ENCODE measurements at regions of chr14 and their contacts with region 1.

Region 1: DNA sequence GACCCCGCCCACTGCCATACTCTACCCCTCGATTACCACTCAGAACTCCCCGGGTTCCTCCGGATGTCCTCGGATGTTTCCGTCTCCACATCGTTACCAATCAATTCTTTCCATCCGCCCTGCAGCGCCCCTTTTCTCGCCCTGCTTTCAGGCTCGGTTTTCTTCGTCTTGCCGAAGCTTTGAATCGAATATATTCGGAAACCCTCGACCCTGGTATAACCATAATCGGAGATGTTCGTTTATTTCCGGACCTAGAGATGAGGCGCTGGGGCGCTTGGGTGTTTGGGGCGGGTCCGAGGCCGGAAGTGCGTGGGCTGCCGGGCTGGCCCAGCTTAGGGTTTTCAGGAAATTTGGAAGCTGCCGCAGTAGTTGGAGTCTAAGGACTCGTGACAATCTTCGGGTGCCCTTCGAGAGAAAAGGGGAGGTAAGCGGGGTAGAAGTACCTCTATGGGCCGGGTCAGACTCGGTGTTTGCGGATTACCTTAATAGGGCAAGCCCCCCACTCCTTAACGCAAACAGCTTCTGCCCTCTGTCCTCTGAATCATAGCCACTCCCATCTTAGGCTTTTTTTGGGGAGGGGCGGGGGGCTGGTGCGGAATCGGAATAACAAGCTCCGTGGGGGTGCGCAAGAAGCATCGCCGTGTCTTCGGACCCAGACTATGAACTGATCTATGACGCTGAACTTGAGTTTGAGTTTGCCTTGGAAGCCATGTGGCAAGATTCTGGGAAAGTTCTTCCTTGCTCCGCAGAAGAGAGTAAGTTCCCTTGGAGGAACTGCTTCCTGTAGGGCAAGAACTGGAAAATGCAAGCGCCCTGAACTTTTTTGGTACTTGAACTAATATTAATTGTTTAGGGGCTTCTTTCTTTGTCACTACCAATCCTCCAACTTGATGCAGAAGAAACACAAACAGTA is at the start of gene C14orf119:
- DNase-seq: peak; percentile 99 to 100 (median 100)
- H3K4me3 ChIP-seq: peak within 1 kb of the TSS; percentile 90 to 91
- H3K4me3 Mint-ChIP-seq: no peak within 1 kb of the TSS
- H3K27ac ChIP-seq: peak within 1 kb of the TSS; percentile 94
- H3K27ac Mint-ChIP-seq: no peak within 1 kb of the TSS
- H3K4me1 ChIP-seq: peaks cover 45% of the 10 kb centered on the region
- H3K4me1 Mint-ChIP-seq: peaks cover 17 to 31% (median 24%) of the 10 kb centered on the region in 4 donors
- H3K27me3 ChIP-seq: no peaks in the 10 kb centered on the region
- H3K27me3 Mint-ChIP-seq: no peaks in the 10 kb centered on the region
- total RNA-seq, gene C14orf119: 49.7 to 54.0 TPM

Region 2: GRCh38 chr14:22685467-22685866 is 410.0 kb before region 1 on chr14:
- CTCF ChIA-PET with region 1: no interaction called
- POLR2A ChIA-PET with region 1: no interaction called
- intact Hi-C with region 1: no loop called
- DNase-seq: no peak
- H3K4me3 ChIP-seq: no peak overlapping the region
- H3K4me3 Mint-ChIP-seq: no peak overlapping the region
- H3K27ac ChIP-seq: no peak overlapping the region
- H3K27ac Mint-ChIP-seq: no peak overlapping the region
- H3K4me1 ChIP-seq: no peaks in the 10 kb centered on the region
- H3K4me1 Mint-ChIP-seq: no peaks in the 10 kb centered on the region
- H3K27me3 ChIP-seq: no peaks in the 10 kb centered on the region
- H3K27me3 Mint-ChIP-seq: peaks cover 38 to 39% of the 10 kb centered on the region in 2 donors

Region 3: GRCh38 chr14:22766456-22767322 is 328.8 kb before region 1 on chr14 and contains the start of gene OXA1L:
- CTCF ChIA-PET with region 1: no interaction called
- POLR2A ChIA-PET with region 1: interaction called, 13 read pairs
- intact Hi-C with region 1: no loop called
- DNase-seq: peak; percentile 95 to 98 (median 98)
- H3K4me3 ChIP-seq: peak within 1 kb of the TSS; percentile 62 to 88
- H3K4me3 Mint-ChIP-seq: peak within 1 kb of the TSS; percentile 85 to 96 (median 94)
- H3K27ac ChIP-seq: peak within 1 kb of the TSS; percentile 88
- H3K27ac Mint-ChIP-seq: peak within 1 kb of the TSS; percentile 86 to 100 (median 98)
- H3K4me1 ChIP-seq: peaks cover 24% of the 10 kb centered on the region
- H3K4me1 Mint-ChIP-seq: peaks cover 26 to 39% (median 34%) of the 10 kb centered on the region in 4 donors
- H3K27me3 ChIP-seq: no peaks in the 10 kb centered on the region
- H3K27me3 Mint-ChIP-seq: no peaks in the 10 kb centered on the region
- total RNA-seq, gene OXA1L: 129 to 137 TPM

Region 4: GRCh38 chr14:22781586-22781991 is 313.9 kb before region 1 on chr14:
- CTCF ChIA-PET with region 1: no interaction called
- POLR2A ChIA-PET with region 1: no interaction called
- intact Hi-C with region 1: no loop called
- DNase-seq: no peak
- H3K4me3 ChIP-seq: no peak overlapping the region
- H3K4me3 Mint-ChIP-seq: peak overlapping the region in 1 of 8 donors; percentile 60
- H3K27ac ChIP-seq: no peak overlapping the region
- H3K27ac Mint-ChIP-seq: peak overlapping the region in 3 of 7 donors; percentile 42 to 62 (median 60)
- H3K4me1 ChIP-seq: no peaks in the 10 kb centered on the region
- H3K4me1 Mint-ChIP-seq: no peaks in the 10 kb centered on the region
- H3K27me3 ChIP-seq: no peaks in the 10 kb centered on the region
- H3K27me3 Mint-ChIP-seq: peaks cover 0 to 2% of the 10 kb centered on the region in 2 donors

Region 5: DNA sequence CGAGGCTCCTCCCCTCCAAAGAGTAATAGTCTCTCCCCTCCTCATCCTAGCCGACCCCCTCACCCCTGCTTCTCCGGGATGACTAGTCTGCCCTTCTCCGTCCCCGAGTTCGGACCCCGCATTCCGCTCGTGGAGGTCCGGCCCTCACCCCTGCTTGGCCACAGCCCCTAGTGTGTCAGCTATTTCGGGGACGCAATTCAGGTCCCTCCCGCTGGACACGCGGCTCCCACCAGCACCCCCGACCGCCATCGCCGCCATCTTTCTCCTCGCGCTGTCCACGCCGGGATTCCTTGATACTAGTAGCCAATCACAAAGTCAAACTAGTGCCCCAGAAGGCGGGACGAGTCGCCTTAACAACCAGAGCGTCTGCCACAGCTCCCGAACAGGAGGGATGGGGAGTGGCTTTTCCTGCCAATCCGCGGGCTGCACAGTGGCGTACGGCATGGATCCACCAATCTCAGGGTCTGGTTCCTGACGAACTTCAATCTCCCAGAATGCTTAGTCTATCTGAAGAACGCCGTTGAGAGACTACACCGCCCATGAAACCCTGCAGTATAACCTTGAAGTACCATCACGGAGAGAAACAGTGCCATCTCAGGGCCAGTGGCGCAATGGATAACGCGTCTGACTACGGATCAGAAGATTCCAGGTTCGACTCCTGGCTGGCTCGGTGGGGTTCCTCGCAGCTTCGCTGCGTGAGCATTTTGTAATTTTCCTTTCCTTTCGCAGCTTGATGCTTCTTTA is 166.2 kb before region 1 on chr14 and contains the start of gene PRMT5:
- CTCF ChIA-PET with region 1: interaction called, 3 read pairs
- POLR2A ChIA-PET with region 1: interaction called, 17 read pairs
- intact Hi-C with region 1: no loop called
- DNase-seq: peak; percentile 98 to 100 (median 99)
- H3K4me3 ChIP-seq: peak within 1 kb of the TSS; percentile 83 to 99
- H3K4me3 Mint-ChIP-seq: no peak within 1 kb of the TSS
- H3K27ac ChIP-seq: peak within 1 kb of the TSS; percentile 91
- H3K27ac Mint-ChIP-seq: peak within 1 kb of the TSS in 1 of 7 donors; percentile 75
- H3K4me1 ChIP-seq: peaks cover 17% of the 10 kb centered on the region
- H3K4me1 Mint-ChIP-seq: peaks cover 9 to 14% (median 12%) of the 10 kb centered on the region in 4 donors
- H3K27me3 ChIP-seq: no peaks in the 10 kb centered on the region
- H3K27me3 Mint-ChIP-seq: no peaks in the 10 kb centered on the region
- total RNA-seq, gene PRMT5: 25.8 to 30.5 TPM

Region 6: DNA sequence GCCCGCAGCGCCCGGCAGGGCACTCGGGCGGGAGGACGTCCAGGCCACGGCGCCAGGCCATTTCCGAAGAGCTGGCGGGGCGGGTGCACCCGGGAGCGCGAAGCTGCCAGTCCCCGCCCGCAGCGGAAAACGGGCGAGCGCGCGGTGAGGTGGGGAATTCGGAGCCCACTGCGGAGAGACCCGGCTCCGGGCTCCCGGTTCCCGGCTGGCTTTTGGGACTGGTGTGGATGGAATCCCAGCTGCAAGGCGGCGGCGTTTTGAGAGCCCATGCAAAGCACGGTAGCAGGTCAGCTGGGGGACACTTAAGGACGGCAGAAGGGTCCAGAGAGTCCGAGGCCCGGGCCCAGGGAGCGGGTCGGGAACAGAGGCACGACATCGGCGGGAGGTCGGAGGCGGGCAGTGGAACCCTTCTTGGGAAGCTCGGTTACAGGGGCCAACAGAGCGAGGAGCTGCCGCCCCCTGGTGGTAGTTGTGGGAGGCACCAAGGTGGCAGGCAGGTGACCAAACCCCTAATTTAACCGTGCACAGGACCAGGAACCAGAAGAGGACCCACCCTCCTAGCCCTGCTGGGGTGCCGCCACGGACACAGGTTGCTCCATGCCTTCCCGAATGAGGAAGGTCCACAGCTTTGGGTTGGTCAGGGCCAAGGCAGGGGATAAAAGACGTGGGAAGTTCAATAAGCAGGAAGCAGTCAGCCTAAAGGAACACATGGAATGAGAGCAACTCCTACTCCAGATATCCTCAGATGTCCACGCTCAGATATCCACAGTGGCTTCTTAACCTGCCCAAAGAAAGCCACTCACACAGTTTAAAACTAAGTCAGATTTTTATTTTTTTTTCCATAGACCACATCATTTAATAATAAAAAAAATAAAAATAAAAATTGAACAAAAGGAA is 37.4 kb before region 1 on chr14:
- CTCF ChIA-PET with region 1: interaction called, 7 read pairs
- POLR2A ChIA-PET with region 1: interaction called, 11 read pairs
- intact Hi-C with region 1: no loop called
- DNase-seq: peak; percentile 80 to 84 (median 82)
- H3K4me3 ChIP-seq: peak overlapping the region; percentile 36 to 89
- H3K4me3 Mint-ChIP-seq: peak overlapping the region; percentile 84 to 91 (median 88)
- H3K27ac ChIP-seq: peak overlapping the region; percentile 36
- H3K27ac Mint-ChIP-seq: peak overlapping the region in 6 of 7 donors; percentile 60 to 83 (median 82)
- H3K4me1 ChIP-seq: peaks cover 17% of the 10 kb centered on the region
- H3K4me1 Mint-ChIP-seq: peaks cover 11 to 21% (median 15%) of the 10 kb centered on the region in 4 donors
- H3K27me3 ChIP-seq: no peaks in the 10 kb centered on the region
- H3K27me3 Mint-ChIP-seq: peaks cover 0 to 1% of the 10 kb centered on the region in 2 donors

Region 7: DNA sequence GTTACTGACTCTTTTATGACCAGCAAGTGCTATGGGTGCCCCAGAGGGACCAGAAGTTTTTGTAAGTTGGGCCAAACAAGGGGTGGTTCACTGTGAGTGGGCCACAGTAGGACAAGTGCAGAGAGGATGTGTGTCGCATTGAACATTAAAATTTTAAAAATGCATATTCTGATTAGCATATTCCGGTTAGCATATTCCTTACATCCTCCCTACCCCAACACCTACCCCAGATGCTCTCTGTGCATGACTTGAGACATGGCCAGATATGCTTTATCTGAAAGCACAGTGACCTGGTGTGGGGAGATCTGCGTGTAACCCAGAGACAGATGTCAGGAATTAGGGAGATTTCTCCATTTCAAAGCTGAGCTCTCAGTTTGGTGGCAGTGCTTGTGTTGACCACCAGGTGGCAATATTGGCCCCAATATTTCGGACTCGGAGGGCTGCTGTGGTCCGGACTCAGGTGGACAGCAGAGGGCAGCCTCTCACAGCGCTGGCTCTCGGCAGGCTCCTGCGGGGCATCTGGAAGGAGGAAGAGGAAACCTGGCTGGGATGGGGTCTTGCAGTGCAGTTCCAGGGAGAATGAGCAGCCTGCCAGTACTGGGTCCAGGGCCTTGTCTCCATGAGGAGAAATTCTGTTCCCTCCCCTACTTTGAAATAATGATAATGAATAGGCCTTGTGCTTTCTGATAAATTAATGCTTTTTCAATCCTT is 25.2 kb after region 1 on chr14:
- CTCF ChIA-PET with region 1: interaction called, 33 read pairs
- POLR2A ChIA-PET with region 1: interaction called, 67 read pairs
- intact Hi-C with region 1: no loop called
- DNase-seq: peak; percentile 68 to 76 (median 75)
- H3K4me3 ChIP-seq: peak overlapping the region in 1 of 2 donors; percentile 20
- H3K4me3 Mint-ChIP-seq: peak overlapping the region; percentile 40 to 90 (median 80)
- H3K27ac ChIP-seq: peak overlapping the region; percentile 49
- H3K27ac Mint-ChIP-seq: peak overlapping the region; percentile 86 to 95 (median 91)
- H3K4me1 ChIP-seq: peaks cover 57% of the 10 kb centered on the region
- H3K4me1 Mint-ChIP-seq: peaks cover 28 to 55% (median 34%) of the 10 kb centered on the region in 4 donors
- H3K27me3 ChIP-seq: no peaks in the 10 kb centered on the region
- H3K27me3 Mint-ChIP-seq: no peaks in the 10 kb centered on the region

Region 8: GRCh38 chr14:23320774-23321571 is 225.5 kb after region 1 on chr14 and contains the start of gene PABPN1:
- CTCF ChIA-PET with region 1: interaction called, 5 read pairs
- POLR2A ChIA-PET with region 1: interaction called, 44 read pairs
- intact Hi-C with region 1: no loop called
- DNase-seq: peak; percentile 96 to 100 (median 99)
- H3K4me3 ChIP-seq: peak within 1 kb of the TSS; percentile 73 to 98
- H3K4me3 Mint-ChIP-seq: peak within 1 kb of the TSS; percentile 91 to 94 (median 92)
- H3K27ac ChIP-seq: peak within 1 kb of the TSS; percentile 89
- H3K27ac Mint-ChIP-seq: peak within 1 kb of the TSS; percentile 90 to 99 (median 98)
- H3K4me1 ChIP-seq: peaks cover 29% of the 10 kb centered on the region
- H3K4me1 Mint-ChIP-seq: peaks cover 18 to 37% (median 27%) of the 10 kb centered on the region in 4 donors
- H3K27me3 ChIP-seq: no peaks in the 10 kb centered on the region
- H3K27me3 Mint-ChIP-seq: peaks cover 0 to 2% of the 10 kb centered on the region in 2 donors
- total RNA-seq, gene PABPN1: 194 to 196 TPM